Mammary epithelial cell (primary cell): ENCODE measurements at regions of chr19 and their contacts with region 1.

Region 1: GRCh38 chr19:4208385-4209094 is 20.8 kb upstream of the EBI3 start:
- DNase-seq: peak; percentile 45
- H3K4me3 ChIP-seq: no peak overlapping the region
- H3K27ac ChIP-seq: no peak overlapping the region
- H3K4me1 ChIP-seq: no peaks in the 10 kb centered on the region
- H3K27me3 ChIP-seq: no peaks in the 10 kb centered on the region
- CTCF ChIP-seq: peak; percentile 20 to 37

Region 2: DNA sequence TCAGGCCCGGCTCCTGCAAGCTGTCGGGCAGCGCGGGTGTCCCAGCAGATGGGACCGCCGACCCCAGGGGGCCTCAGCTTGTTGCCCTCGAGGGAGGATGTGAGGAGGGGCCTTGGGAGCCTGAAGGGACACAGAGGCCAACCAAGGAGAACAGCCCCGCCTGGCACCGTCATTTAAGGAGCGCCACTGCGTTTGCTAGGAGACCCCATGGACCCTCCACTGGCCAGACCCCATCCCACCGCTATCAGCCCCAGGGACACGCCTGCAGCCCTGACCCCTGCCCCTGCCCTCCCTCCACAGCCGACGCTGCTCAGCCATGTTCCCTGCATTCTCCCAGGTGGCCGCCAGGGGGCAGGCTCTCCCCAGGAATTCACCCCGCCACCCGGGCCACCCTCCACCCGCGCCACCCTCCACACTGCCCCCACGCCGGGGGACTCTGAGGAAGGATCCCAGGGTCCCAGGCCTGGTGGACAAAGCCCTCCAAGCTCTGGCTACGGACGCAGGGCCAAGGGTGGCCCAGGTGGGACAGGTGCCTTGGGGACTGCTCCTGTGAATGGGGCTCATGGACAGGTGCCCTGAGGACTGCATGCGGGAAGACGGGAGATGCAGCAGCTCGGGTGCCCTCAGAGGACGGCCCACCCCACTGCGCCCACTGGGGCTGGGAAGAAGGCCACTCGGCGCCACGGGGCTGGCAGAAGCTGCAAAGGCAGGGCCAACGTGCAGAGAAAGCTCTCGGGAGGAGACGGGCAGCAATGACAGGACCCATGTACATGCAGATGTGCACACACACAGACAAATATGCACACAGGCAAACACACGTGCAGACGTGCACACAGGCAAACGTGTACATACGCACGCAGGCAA is 542.6 kb before region 1 on chr19:
- CTCF ChIA-PET with region 1: no interaction called
- dilution Hi-C with region 1: no loop called
- in situ Hi-C with region 1: no loop called
- intact Hi-C with region 1: loop called (anchors 10 kb)
- DNase-seq: peak; percentile 14
- H3K4me3 ChIP-seq: no peak overlapping the region
- H3K27ac ChIP-seq: no peak overlapping the region
- H3K4me1 ChIP-seq: peaks cover 22% of the 10 kb centered on the region
- H3K27me3 ChIP-seq: no peaks in the 10 kb centered on the region
- CTCF ChIP-seq: peak; percentile 72 to 90

Region 3: GRCh38 chr19:4077882-4078614 is 130.5 kb before region 1 on chr19:
- CTCF ChIA-PET with region 1: no interaction called
- dilution Hi-C with region 1: no loop called
- in situ Hi-C with region 1: no loop called
- intact Hi-C with region 1: no loop called
- DNase-seq: no peak
- H3K4me3 ChIP-seq: peak overlapping the region; percentile 33 to 46 (median 41)
- H3K27ac ChIP-seq: no peak overlapping the region
- H3K4me1 ChIP-seq: peaks cover 3% of the 10 kb centered on the region
- H3K27me3 ChIP-seq: no peaks in the 10 kb centered on the region
- CTCF ChIP-seq: no peak

Region 4: DNA sequence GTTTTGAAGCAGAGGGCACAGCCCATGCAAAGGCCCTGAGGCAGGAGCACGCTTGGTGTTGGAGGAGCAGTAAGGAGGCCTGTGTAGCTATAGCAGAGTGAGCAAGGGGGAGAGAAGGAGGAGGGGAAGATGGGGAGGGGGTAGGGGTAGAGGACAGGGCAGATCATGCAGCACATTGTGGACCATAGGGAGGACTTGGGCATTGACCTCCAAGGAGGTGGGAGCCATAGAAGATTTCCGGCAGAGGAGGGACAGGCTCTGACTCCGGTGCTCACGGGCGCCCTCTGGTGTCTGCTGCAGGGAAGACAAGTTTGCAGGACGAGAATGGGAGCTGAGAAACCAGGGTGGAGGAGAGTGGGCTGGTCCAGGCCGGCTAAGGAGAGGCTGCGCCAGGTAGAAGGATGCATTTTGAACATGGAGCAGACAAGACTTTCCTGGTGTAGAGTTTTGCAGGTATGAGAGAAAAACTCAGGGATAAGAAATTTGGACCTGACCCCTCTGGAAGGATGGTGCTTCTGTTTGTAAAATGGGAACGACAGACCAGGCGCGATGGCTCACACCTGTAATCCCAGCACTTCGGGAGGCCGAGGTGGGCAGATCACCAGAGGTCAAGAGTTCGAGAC is 68.8 kb before region 1 on chr19:
- CTCF ChIA-PET with region 1: no interaction called
- dilution Hi-C with region 1: no loop called
- in situ Hi-C with region 1: no loop called
- intact Hi-C with region 1: loop called (anchors 2 kb)
- DNase-seq: peak; percentile 54
- H3K4me3 ChIP-seq: no peak overlapping the region
- H3K27ac ChIP-seq: no peak overlapping the region
- H3K4me1 ChIP-seq: no peaks in the 10 kb centered on the region
- H3K27me3 ChIP-seq: no peaks in the 10 kb centered on the region
- CTCF ChIP-seq: peak; percentile 86 to 89

Region 5: GRCh38 chr19:4164262-4164661 is 44.3 kb before region 1 on chr19:
- CTCF ChIA-PET with region 1: no interaction called
- dilution Hi-C with region 1: no loop called
- in situ Hi-C with region 1: no loop called
- intact Hi-C with region 1: loop called (anchors 1 kb)
- DNase-seq: no peak
- H3K4me3 ChIP-seq: no peak overlapping the region
- H3K27ac ChIP-seq: no peak overlapping the region
- H3K4me1 ChIP-seq: no peaks in the 10 kb centered on the region
- H3K27me3 ChIP-seq: no peaks in the 10 kb centered on the region
- CTCF ChIP-seq: no peak

Region 6: DNA sequence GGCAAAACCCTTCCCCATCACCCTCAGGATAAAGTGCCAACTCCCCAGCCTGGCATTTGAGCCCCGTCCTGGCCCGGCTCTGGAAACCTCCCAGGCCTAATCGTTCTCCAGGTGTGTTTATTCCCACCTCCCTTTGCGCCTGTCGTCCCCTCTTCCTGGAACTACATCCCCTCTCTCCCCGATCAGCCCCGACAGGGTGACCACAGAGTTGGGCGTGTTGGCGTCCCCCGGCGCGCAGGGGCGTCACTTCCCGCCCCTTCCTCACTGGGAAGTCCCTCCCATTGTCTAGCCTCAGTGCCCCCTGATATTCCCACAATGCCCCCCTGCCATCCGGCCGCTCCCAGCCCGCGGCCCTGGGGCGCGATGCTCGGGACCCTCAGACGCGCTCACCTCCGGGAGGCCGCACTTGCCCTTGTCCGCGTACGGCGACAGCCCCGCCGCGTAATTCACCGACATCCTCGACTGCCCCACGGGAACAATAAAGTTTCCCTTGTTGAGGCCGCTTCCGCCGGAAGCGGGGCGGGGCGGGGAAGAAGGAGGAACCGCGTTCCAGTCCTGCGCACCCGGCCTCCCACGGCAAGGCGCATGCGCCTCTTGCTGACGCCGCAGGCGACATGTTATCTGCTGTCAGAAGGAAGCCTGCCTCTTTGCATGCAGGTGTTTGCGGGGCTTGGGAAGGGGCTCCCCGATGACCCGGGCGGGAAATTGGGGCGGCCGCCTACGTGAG is 26.3 kb before region 1 on chr19 and contains the starts of genes ANKRD24 and SIRT6:
- CTCF ChIA-PET with region 1: no interaction called
- dilution Hi-C with region 1: no loop called
- in situ Hi-C with region 1: no loop called
- intact Hi-C with region 1: no loop called
- DNase-seq: peak; percentile 91
- H3K4me3 ChIP-seq: peak within 1 kb of the TSS; percentile 91 to 94 (median 93)
- H3K27ac ChIP-seq: peak within 1 kb of the TSS; percentile 45
- H3K4me1 ChIP-seq: peaks cover 13% of the 10 kb centered on the region
- H3K27me3 ChIP-seq: no peaks in the 10 kb centered on the region
- CTCF ChIP-seq: no peak
- total RNA-seq, gene ANKRD24: 0.67 to 0.73 TPM
- total RNA-seq, gene SIRT6: 8.7 to 28.8 TPM

Region 7: DNA sequence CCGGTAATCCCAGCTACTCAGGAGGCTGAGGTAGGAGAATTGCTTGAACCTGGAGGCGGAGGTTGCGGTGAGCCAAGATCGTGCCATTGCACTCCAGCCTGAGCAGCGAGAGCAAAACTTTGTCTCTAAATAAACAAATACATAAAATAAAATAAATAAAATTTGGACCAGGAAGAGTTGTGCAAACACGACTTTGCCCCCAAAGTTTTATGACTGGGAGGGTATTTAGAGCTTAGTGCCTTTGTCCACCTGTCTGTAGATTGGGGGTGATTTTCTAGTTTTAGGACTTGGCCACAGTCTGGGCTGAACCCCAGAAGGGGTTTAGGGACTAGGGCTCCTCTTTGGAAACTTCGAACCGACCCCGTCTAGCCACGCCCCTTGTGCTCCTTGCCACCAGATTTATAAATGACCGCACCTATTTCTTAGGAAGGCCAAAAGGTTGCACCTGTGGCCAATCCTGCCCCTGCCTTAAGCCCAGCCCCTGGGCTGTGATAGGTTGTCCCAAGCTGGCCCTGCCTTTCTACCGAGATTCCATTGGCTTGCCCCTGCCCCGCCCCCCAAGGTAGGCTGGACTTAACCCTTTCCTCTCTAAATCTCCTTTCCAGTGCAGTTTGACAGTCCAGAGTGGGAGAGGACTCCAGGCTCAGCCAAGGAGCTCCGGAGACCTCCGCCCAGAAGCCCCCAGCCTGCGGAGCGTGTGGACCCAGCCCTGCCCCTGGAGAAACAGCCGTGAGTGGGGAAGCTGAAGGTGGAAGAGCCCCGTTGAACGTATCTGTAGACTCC is 75.8 kb after region 1 on chr19:
- CTCF ChIA-PET with region 1: no interaction called
- dilution Hi-C with region 1: no loop called
- in situ Hi-C with region 1: no loop called
- intact Hi-C with region 1: no loop called
- DNase-seq: no peak
- H3K4me3 ChIP-seq: no peak overlapping the region
- H3K27ac ChIP-seq: no peak overlapping the region
- H3K4me1 ChIP-seq: no peaks in the 10 kb centered on the region
- H3K27me3 ChIP-seq: peaks cover 12% of the 10 kb centered on the region
- CTCF ChIP-seq: no peak